CD4-positive, alpha-beta memory T cell (primary cell): ENCODE measurements at regions of chr9 and their contacts with region 1.

Region 1: GRCh38 chr9:31323726-31324444 is 1060.6 kb upstream of the ACO1 start:
- DNase-seq: peak in 4 of 5 donors; percentile 26 to 46 (median 34)
- H3K4me3 ChIP-seq: no peak overlapping the region
- H3K4me3 Mint-ChIP-seq: peak overlapping the region; percentile 21 to 77 (median 52)
- H3K27ac ChIP-seq: peak overlapping the region; percentile 43
- H3K27ac Mint-ChIP-seq: peak overlapping the region; percentile 64 to 90 (median 83)
- H3K4me1 ChIP-seq: peaks cover 36% of the 10 kb centered on the region
- H3K4me1 Mint-ChIP-seq: peaks cover 28 to 56% (median 39%) of the 10 kb centered on the region in 4 donors
- H3K27me3 ChIP-seq: no peaks in the 10 kb centered on the region
- H3K27me3 Mint-ChIP-seq: no peaks in the 10 kb centered on the region

Region 2: GRCh38 chr9:31335529-31336234 is 11.8 kb after region 1 on chr9:
- CTCF ChIA-PET with region 1: no interaction called
- POLR2A ChIA-PET with region 1: interaction called, 14 read pairs
- intact Hi-C with region 1: no loop called
- DNase-seq: peak in 4 of 5 donors; percentile 15 to 46 (median 18)
- H3K4me3 ChIP-seq: no peak overlapping the region
- H3K4me3 Mint-ChIP-seq: peak overlapping the region in 7 of 8 donors; percentile 43 to 79 (median 64)
- H3K27ac ChIP-seq: no peak overlapping the region
- H3K27ac Mint-ChIP-seq: peak overlapping the region; percentile 62 to 89 (median 80)
- H3K4me1 ChIP-seq: peaks cover 35% of the 10 kb centered on the region
- H3K4me1 Mint-ChIP-seq: peaks cover 5 to 28% (median 18%) of the 10 kb centered on the region in 4 donors
- H3K27me3 ChIP-seq: no peaks in the 10 kb centered on the region
- H3K27me3 Mint-ChIP-seq: no peaks in the 10 kb centered on the region